ENCODE measurements at regions of chr6 and their contacts with region 1.

Region 1: DNA sequence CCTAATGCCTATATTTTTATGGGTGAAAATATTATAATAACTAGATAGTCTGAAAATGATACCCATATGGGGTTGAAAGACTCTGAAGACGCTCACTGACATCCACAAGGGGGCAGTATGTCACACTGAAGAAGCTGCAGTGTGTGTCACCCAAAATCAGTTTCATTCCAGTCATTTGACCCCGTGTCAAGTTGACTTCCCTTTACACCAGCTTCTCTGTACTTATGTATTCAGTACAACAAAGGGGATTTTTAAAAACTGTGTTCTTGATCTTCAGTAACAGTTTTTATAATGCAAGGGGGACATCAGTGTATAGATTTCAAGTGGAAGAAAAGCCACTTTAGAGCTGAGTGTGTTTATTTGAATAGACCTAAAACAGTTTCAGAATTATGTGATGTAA is 19.3 kb downstream of the FAXC start:
- DNase-seq: no peak
- ATAC-seq: peak; percentile 82
- H3K4me3 Mint-ChIP-seq: no peak overlapping the region
- H3K27ac Mint-ChIP-seq: no peak overlapping the region
- H3K4me1 Mint-ChIP-seq: peaks cover 14% of the 10 kb centered on the region
- H3K27me3 Mint-ChIP-seq: no peaks in the 10 kb centered on the region
- CTCF ChIP-seq: peak; percentile 71

Region 2: GRCh38 chr6:99307295-99307907 is 22.8 kb before region 1 on chr6:
- CTCF ChIA-PET with region 1: no interaction called
- POLR2A ChIA-PET with region 1: no interaction called
- intact Hi-C with region 1: no loop called
- DNase-seq: no peak
- ATAC-seq: no peak
- H3K4me3 Mint-ChIP-seq: no peak overlapping the region
- H3K27ac Mint-ChIP-seq: no peak overlapping the region
- H3K4me1 Mint-ChIP-seq: no peaks in the 10 kb centered on the region
- H3K27me3 Mint-ChIP-seq: peaks cover 10% of the 10 kb centered on the region
- CTCF ChIP-seq: no peak

Region 3: DNA sequence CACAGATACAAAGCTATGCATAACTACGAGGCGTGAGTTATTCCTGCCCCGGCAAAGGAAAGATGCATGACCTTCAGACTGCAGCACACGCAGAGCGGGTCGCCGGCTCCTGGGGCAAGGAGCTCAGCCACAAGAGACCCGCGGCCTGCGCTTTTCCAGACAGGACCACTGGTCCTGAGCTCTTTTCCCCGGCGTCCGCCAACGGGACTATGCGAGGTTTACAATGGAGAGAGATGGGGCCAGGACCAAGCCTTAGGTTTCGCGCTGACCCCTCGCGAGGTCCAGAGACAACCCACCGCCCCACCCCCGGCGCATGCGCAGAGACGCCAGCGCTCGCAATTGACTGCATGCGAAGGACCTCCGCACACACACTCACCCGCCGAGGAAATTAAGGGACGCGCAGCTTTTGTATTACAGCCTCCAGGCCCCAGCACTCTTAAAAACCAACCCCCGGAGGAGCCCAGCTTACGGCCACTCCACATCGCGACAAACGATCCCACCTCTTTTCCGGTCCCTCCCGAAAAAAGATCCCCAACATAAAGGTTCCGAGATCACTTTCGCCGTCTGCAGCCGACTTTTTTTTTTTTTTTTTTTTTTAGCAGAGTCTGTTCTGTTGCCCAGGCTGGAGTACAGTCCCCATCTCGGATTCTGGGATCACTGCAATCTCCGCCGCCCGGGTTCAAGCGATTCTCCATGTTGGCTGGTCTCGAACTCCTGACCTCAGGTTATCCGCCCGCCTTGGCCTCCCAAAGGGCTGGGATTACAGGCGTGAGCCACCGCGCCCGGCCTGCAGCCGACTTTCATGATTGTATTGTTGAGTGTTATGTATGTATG is 63.8 kb after region 1 on chr6 and contains the start of gene COQ3:
- CTCF ChIA-PET with region 1: interaction called, 11 read pairs
- POLR2A ChIA-PET with region 1: interaction called, 3 read pairs
- intact Hi-C with region 1: loop called (anchors 10 kb)
- DNase-seq: peak; percentile 71
- ATAC-seq: peak; percentile 79
- H3K4me3 Mint-ChIP-seq: peak within 1 kb of the TSS; percentile 97
- H3K27ac Mint-ChIP-seq: peak within 1 kb of the TSS; percentile 89
- H3K4me1 Mint-ChIP-seq: peaks cover 13% of the 10 kb centered on the region
- H3K27me3 Mint-ChIP-seq: no peaks in the 10 kb centered on the region
- CTCF ChIP-seq: no peak
- total RNA-seq, gene COQ3: 4.8 and 5.6 TPM in 2 replicates

Region 4: DNA sequence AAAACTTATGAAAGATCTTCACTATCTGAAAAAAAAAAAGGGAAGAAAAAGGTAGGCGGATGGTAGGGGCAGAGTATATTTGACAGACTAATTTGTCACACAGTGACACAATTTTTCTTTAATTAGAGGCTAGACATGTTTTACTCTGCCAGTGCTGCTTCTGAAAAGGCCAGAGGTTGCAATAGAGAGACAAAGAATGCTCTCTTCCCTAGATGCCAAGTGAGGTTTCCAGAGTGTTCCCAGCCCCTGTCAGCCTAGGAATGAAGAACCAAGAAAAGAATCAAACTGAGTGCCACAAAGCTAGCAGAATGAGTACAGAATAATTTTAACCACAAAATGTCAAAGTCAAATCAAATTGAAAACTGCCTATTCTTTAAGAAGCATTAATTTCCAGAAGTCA is 81.9 kb after region 1 on chr6:
- CTCF ChIA-PET with region 1: no interaction called
- POLR2A ChIA-PET with region 1: no interaction called
- intact Hi-C with region 1: no loop called
- DNase-seq: no peak
- ATAC-seq: no peak
- H3K4me3 Mint-ChIP-seq: no peak overlapping the region
- H3K27ac Mint-ChIP-seq: no peak overlapping the region
- H3K4me1 Mint-ChIP-seq: peaks cover 23% of the 10 kb centered on the region
- H3K27me3 Mint-ChIP-seq: no peaks in the 10 kb centered on the region
- CTCF ChIP-seq: no peak

Region 5: GRCh38 chr6:99790679-99791078 is 460.5 kb after region 1 on chr6:
- CTCF ChIA-PET with region 1: no interaction called
- POLR2A ChIA-PET with region 1: no interaction called
- intact Hi-C with region 1: loop called (anchors 1 kb)
- DNase-seq: no peak
- ATAC-seq: no peak
- H3K4me3 Mint-ChIP-seq: no peak overlapping the region
- H3K27ac Mint-ChIP-seq: no peak overlapping the region
- H3K4me1 Mint-ChIP-seq: no peaks in the 10 kb centered on the region
- H3K27me3 Mint-ChIP-seq: peaks cover 14% of the 10 kb centered on the region
- CTCF ChIP-seq: no peak